ENCODE measurements at regions of chr13 and their contacts with region 1.

Region 1: GRCh38 chr13:73879346-73880015 is 254.7 kb downstream of the KLF12 start:
- DNase-seq: no peak
- ATAC-seq: peak; percentile 17
- H3K4me3 ChIP-seq: no peak overlapping the region
- H3K4me3 Mint-ChIP-seq: no peak overlapping the region
- H3K27ac ChIP-seq: no peak overlapping the region
- H3K27ac Mint-ChIP-seq: peak overlapping the region; percentile 72
- H3K4me1 ChIP-seq: peaks cover 13% of the 10 kb centered on the region
- H3K4me1 Mint-ChIP-seq: peaks cover 48% of the 10 kb centered on the region
- H3K27me3 ChIP-seq: no peaks in the 10 kb centered on the region
- H3K27me3 Mint-ChIP-seq: no peaks in the 10 kb centered on the region
- CTCF ChIP-seq: no peak

Region 2: GRCh38 chr13:72599178-72599743 is 1280.2 kb before region 1 on chr13:
- CTCF ChIA-PET with region 1: no interaction called
- POLR2A ChIA-PET with region 1: no interaction called
- intact Hi-C with region 1: no loop called
- DNase-seq: no peak
- ATAC-seq: no peak
- H3K4me3 ChIP-seq: no peak overlapping the region
- H3K4me3 Mint-ChIP-seq: no peak overlapping the region
- H3K27ac ChIP-seq: no peak overlapping the region
- H3K27ac Mint-ChIP-seq: no peak overlapping the region
- H3K4me1 ChIP-seq: no peaks in the 10 kb centered on the region
- H3K4me1 Mint-ChIP-seq: no peaks in the 10 kb centered on the region
- H3K27me3 ChIP-seq: no peaks in the 10 kb centered on the region
- H3K27me3 Mint-ChIP-seq: no peaks in the 10 kb centered on the region
- CTCF ChIP-seq: no peak

Region 3: GRCh38 chr13:73891805-73892204 is 12.3 kb after region 1 on chr13:
- CTCF ChIA-PET with region 1: no interaction called
- POLR2A ChIA-PET with region 1: interaction called, 3 read pairs
- intact Hi-C with region 1: loop called in 1 of 2 experiments (anchors 2 kb)
- DNase-seq: no peak
- ATAC-seq: no peak
- H3K4me3 ChIP-seq: no peak overlapping the region
- H3K4me3 Mint-ChIP-seq: no peak overlapping the region
- H3K27ac ChIP-seq: no peak overlapping the region
- H3K27ac Mint-ChIP-seq: no peak overlapping the region
- H3K4me1 ChIP-seq: no peaks in the 10 kb centered on the region
- H3K4me1 Mint-ChIP-seq: peaks cover 35% of the 10 kb centered on the region
- H3K27me3 ChIP-seq: no peaks in the 10 kb centered on the region
- H3K27me3 Mint-ChIP-seq: no peaks in the 10 kb centered on the region
- CTCF ChIP-seq: no peak